ENCODE measurements at regions of chr18 and their contacts with region 1.

Region 1: GRCh38 chr18:22363867-22364463 is 53.8 kb downstream of the CTAGE1 start:
- DNase-seq: peak in 2 of 9 experiments; percentile 57 to 71
- ATAC-seq: peak; percentile 61
- H3K4me3 ChIP-seq: no peak overlapping the region
- H3K4me3 Mint-ChIP-seq: no peak overlapping the region
- H3K27ac ChIP-seq: no peak overlapping the region
- H3K27ac Mint-ChIP-seq: no peak overlapping the region
- H3K4me1 ChIP-seq: no peaks in the 10 kb centered on the region
- H3K4me1 Mint-ChIP-seq: peaks cover 4% of the 10 kb centered on the region
- H3K27me3 ChIP-seq: no peaks in the 10 kb centered on the region
- H3K27me3 Mint-ChIP-seq: no peaks in the 10 kb centered on the region
- CTCF ChIP-seq: peak; percentile 26

Region 2: DNA sequence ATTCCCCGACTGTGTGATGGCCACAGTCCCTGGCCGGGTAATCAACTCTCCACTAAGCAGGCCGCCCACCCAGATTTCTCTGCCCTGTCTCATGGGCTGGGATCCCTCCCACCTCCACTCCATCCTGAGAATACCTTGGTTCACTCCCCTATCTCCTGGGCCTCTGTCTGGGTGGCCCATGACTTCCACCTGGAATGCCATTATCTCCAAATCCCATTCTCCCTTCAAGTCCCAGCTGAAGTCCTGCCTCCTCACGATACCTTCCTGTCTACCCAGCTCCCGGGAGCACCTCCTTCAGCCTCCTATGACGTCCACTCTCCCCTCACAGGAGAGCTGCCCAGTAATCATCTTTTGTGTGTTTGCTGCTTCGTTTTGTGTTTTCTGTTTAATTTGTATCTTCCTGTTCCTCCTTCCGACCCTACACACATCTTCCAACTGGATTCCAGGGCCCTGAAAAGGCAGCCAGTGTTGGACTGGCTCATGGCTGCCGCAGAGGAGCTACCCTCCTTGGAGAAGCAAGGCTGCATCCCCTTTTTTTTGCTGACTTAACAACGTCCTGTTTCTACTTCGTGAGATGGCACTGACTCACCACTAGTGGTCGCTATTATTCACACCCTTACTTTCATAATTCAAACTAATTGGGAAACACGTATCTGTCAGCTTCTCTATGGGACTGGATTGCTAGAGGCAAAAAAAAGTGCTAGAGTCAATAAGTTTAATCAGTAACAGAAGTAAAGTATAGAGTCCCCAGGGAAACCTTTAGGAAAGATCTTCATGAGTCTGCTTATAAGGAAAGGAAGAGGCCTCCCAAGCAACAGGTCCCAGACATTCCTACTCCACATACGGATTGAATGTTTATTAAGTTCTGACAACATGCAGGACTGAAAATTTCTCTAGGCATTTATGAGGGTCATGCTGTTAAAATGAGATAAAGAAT is 366.5 kb before region 1 on chr18:
- CTCF ChIA-PET with region 1: interaction called, 5 read pairs
- POLR2A ChIA-PET with region 1: no interaction called
- intact Hi-C with region 1: loop called in 1 of 2 experiments (anchors 5 kb)
- DNase-seq: peak in 2 of 9 experiments; percentile 47 to 59
- ATAC-seq: peak; percentile 36
- H3K4me3 ChIP-seq: no peak overlapping the region
- H3K4me3 Mint-ChIP-seq: no peak overlapping the region
- H3K27ac ChIP-seq: no peak overlapping the region
- H3K27ac Mint-ChIP-seq: no peak overlapping the region
- H3K4me1 ChIP-seq: no peaks in the 10 kb centered on the region
- H3K4me1 Mint-ChIP-seq: peaks cover 2% of the 10 kb centered on the region
- H3K27me3 ChIP-seq: no peaks in the 10 kb centered on the region
- H3K27me3 Mint-ChIP-seq: peaks cover 6% of the 10 kb centered on the region
- CTCF ChIP-seq: peak; percentile 72

Region 3: DNA sequence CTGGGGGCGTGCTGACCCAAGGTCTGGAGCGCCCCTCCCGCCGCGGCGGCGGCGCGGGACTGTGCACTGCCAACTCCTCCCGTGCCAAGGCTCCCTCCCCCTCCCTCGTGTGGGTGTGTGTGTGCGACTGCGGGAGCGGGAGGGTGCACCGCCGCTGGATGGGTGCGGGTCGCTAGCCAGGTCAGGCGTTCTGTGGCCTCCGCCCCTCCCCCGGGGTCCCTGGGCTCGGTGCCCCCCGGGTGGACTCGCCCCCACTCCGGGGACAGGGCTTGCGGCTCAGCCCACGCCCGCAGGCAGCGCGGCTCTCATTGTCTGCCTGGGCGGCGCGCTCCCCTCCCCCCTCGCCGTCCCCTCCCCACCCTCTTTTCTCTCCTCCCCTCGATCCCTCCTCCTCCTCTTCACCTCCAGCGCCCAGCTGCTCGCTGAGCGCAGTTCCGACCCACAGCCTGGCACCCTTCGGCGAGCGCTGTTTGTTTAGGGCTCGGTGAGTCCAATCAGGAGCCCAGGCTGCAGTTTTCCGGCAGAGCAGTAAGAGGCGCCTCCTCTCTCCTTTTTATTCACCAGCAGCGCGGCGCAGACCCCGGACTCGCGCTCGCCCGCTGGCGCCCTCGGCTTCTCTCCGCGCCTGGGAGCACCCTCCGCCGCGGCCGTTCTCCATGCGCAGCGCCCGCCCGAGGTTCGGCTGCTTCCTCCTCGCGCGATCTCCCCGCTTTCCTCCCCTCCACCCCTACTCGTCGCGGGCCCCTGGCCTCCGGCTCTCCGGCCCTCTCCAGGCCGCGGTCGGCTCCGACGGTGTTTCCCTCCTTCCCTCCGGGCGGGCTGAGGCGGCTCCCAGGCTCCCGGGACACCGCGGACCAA is 194.7 kb before region 1 on chr18 and contains the start of gene GATA6:
- CTCF ChIA-PET with region 1: interaction called, 3 read pairs
- POLR2A ChIA-PET with region 1: no interaction called
- intact Hi-C with region 1: loop called (anchors 1 to 5 kb)
- DNase-seq: peak in 7 of 9 experiments; percentile 15 to 82 (median 63)
- ATAC-seq: peak; percentile 72
- H3K4me3 ChIP-seq: peak within 1 kb of the TSS; percentile 54 to 68
- H3K4me3 Mint-ChIP-seq: peak within 1 kb of the TSS; percentile 90
- H3K27ac ChIP-seq: no peak within 1 kb of the TSS
- H3K27ac Mint-ChIP-seq: no peak within 1 kb of the TSS
- H3K4me1 ChIP-seq: peaks cover 34% of the 10 kb centered on the region
- H3K4me1 Mint-ChIP-seq: peaks cover 29% of the 10 kb centered on the region
- H3K27me3 ChIP-seq: peaks cover 44 to 59% of the 10 kb centered on the region in 2 experiments
- H3K27me3 Mint-ChIP-seq: peaks cover 62% of the 10 kb centered on the region
- CTCF ChIP-seq: peak; percentile 13
- total RNA-seq, gene GATA6: 4.0 to 4.3 TPM

Region 4: GRCh38 chr18:22238036-22238435 is 125.9 kb before region 1 on chr18:
- CTCF ChIA-PET with region 1: interaction called, 5 read pairs
- POLR2A ChIA-PET with region 1: no interaction called
- intact Hi-C with region 1: loop called (anchors 5 to 10 kb)
- DNase-seq: peak in 7 of 9 experiments; percentile 3 to 86 (median 35)
- ATAC-seq: peak; percentile 89
- H3K4me3 ChIP-seq: no peak overlapping the region
- H3K4me3 Mint-ChIP-seq: no peak overlapping the region
- H3K27ac ChIP-seq: no peak overlapping the region
- H3K27ac Mint-ChIP-seq: no peak overlapping the region
- H3K4me1 ChIP-seq: peaks cover 6% of the 10 kb centered on the region
- H3K4me1 Mint-ChIP-seq: peaks cover 16% of the 10 kb centered on the region
- H3K27me3 ChIP-seq: no peaks in the 10 kb centered on the region
- H3K27me3 Mint-ChIP-seq: no peaks in the 10 kb centered on the region
- CTCF ChIP-seq: no peak

Region 5: GRCh38 chr18:22342625-22343024 is 21.3 kb before region 1 on chr18:
- CTCF ChIA-PET with region 1: interaction called, 7 read pairs
- POLR2A ChIA-PET with region 1: interaction called, 3 read pairs
- intact Hi-C with region 1: loop called in 1 of 2 experiments (anchors 2 kb)
- DNase-seq: peak in 5 of 9 experiments; percentile 40 to 85 (median 67)
- ATAC-seq: peak; percentile 45
- H3K4me3 ChIP-seq: no peak overlapping the region
- H3K4me3 Mint-ChIP-seq: peak overlapping the region; percentile 53
- H3K27ac ChIP-seq: peak overlapping the region; percentile 75 to 88
- H3K27ac Mint-ChIP-seq: peak overlapping the region; percentile 98
- H3K4me1 ChIP-seq: peaks cover 74% of the 10 kb centered on the region
- H3K4me1 Mint-ChIP-seq: peaks cover 84% of the 10 kb centered on the region
- H3K27me3 ChIP-seq: no peaks in the 10 kb centered on the region
- H3K27me3 Mint-ChIP-seq: no peaks in the 10 kb centered on the region
- CTCF ChIP-seq: no peak

Measured in CD8-positive, alpha-beta T cell (primary cell).